ENCODE measurements at regions of chr2 and their contacts with region 1.

Region 1: GRCh38 chr2:162073888-162074645 is at the start of gene DPP4:
- DNase-seq: peak; percentile 42
- H3K4me3 Mint-ChIP-seq: peak within 1 kb of the TSS; percentile 98
- H3K27ac Mint-ChIP-seq: peak within 1 kb of the TSS; percentile 93
- H3K4me1 Mint-ChIP-seq: peaks cover 55% of the 10 kb centered on the region
- H3K27me3 Mint-ChIP-seq: no peaks in the 10 kb centered on the region
- total RNA-seq, gene DPP4: 94.4 and 99.9 TPM in 2 replicates

Region 2: GRCh38 chr2:161166538-161167409 is 907.3 kb before region 1 on chr2:
- intact Hi-C with region 1: loop called (anchors 5 kb)
- DNase-seq: peak; percentile 74
- H3K4me3 Mint-ChIP-seq: peak overlapping the region; percentile 75
- H3K27ac Mint-ChIP-seq: peak overlapping the region; percentile 94
- H3K4me1 Mint-ChIP-seq: peaks cover 100% of the 10 kb centered on the region
- H3K27me3 Mint-ChIP-seq: no peaks in the 10 kb centered on the region

Region 3: GRCh38 chr2:161965994-161966393 is 108.1 kb before region 1 on chr2:
- intact Hi-C with region 1: loop called (anchors 1 kb)
- DNase-seq: no peak
- H3K4me3 Mint-ChIP-seq: no peak overlapping the region
- H3K27ac Mint-ChIP-seq: peak overlapping the region; percentile 1
- H3K4me1 Mint-ChIP-seq: peaks cover 86% of the 10 kb centered on the region
- H3K27me3 Mint-ChIP-seq: no peaks in the 10 kb centered on the region

Region 4: GRCh38 chr2:162013514-162014475 is 60.3 kb before region 1 on chr2:
- intact Hi-C with region 1: loop called (anchors 1 kb)
- DNase-seq: no peak
- H3K4me3 Mint-ChIP-seq: peak overlapping the region; percentile 81
- H3K27ac Mint-ChIP-seq: peak overlapping the region; percentile 95
- H3K4me1 Mint-ChIP-seq: peaks cover 95% of the 10 kb centered on the region
- H3K27me3 Mint-ChIP-seq: no peaks in the 10 kb centered on the region

Region 5: DNA sequence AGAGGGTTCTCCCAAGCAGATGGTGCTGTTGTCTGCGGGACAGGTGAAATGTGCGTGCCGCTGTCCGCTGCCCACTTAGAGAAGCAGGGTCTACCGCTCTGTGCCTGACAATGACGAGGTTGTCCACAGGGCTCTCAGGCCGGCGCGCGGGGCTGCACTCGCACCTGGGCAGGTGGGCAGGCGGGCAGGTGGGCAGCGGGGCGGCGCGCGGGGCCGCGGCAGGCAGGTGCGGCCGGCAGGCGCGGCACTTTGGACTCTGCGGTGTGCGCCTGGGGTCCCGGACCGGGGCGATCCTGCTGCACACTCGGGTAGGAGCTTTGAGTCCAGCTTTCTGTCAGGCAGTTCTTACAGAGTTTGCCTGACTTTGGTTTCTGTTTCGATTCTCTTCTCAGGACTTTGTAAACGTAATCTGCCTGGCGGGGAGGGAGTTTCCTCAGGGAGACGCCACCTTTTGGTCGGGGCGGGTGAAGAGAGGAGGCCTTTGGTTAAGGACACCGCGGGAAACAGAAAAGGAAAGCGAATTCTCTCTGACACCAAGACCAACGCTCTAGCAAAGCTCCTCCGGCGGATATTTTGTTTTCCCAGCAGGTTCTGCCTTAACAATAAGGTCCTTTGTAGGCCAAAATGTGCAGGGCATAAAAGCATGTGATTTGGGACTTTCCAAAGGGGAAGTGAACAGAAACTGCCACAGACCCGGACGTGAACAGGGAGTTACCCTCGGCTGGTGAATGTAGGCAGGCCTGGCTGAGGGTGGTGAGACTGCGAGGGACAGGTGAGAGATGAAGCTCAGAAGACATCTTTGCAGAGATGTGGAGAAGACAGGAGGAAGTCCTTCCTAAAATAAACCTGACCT is 244.5 kb after region 1 on chr2 and contains the start of gene IFIH1:
- intact Hi-C with region 1: loop called (anchors 2 kb)
- DNase-seq: peak; percentile 79
- H3K4me3 Mint-ChIP-seq: peak within 1 kb of the TSS; percentile 93
- H3K27ac Mint-ChIP-seq: peak within 1 kb of the TSS; percentile 100
- H3K4me1 Mint-ChIP-seq: peaks cover 65% of the 10 kb centered on the region
- H3K27me3 Mint-ChIP-seq: no peaks in the 10 kb centered on the region
- total RNA-seq, gene IFIH1: 27.9 TPM in 2 replicates

Measured in activated T-helper 1 cell treated with anti-CD3 and anti-CD28 coated beads, Interleukin-12 subunit alpha, Interleukin-12 subunit beta, Interleukin-2, Interleukin-4 antibody, amounts not matched to agents 30 ng/mL and 10 ng/mL and 1 ng/mL, durations not matched to agents 14 hours and 24 hours and 36 hours (primary cell).